ENCODE measurements at regions of chr4 and their contacts with region 1.

Region 1: DNA sequence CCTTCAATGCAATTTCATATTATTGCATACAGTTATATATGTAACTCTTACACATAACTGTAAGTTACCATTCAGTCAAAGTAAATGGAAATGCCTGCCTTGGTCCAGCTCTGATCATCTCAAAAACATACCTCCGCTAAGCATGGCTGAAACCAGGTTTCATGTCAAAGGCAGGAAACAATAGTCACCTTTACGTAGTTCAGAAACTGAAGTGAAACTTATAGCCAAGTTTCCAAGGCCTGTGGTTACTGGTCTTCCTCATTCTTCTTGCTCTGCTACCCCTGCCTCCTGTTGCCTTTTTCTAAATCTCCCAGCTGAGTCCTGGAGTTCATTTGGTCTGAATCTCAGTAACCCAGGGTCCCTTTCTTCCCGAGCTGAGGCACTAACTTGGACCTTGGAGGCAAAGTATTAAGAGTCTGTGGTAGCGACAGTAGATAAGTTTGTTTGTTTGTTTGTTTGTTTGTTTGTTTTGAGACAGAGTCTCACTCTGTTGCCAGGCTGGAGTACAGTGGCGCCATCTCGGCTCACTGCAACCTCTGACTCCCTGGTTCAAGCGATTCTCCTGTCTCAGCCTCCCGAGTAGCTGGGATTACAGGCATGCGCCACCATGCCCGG is 30.8 kb downstream of the DAPP1 start:
- DNase-seq: peak; percentile 40
- H3K4me3 Mint-ChIP-seq: peak overlapping the region; percentile 49
- H3K27ac Mint-ChIP-seq: peak overlapping the region; percentile 93
- H3K4me1 Mint-ChIP-seq: peaks cover 75% of the 10 kb centered on the region
- H3K27me3 Mint-ChIP-seq: no peaks in the 10 kb centered on the region

Region 2: DNA sequence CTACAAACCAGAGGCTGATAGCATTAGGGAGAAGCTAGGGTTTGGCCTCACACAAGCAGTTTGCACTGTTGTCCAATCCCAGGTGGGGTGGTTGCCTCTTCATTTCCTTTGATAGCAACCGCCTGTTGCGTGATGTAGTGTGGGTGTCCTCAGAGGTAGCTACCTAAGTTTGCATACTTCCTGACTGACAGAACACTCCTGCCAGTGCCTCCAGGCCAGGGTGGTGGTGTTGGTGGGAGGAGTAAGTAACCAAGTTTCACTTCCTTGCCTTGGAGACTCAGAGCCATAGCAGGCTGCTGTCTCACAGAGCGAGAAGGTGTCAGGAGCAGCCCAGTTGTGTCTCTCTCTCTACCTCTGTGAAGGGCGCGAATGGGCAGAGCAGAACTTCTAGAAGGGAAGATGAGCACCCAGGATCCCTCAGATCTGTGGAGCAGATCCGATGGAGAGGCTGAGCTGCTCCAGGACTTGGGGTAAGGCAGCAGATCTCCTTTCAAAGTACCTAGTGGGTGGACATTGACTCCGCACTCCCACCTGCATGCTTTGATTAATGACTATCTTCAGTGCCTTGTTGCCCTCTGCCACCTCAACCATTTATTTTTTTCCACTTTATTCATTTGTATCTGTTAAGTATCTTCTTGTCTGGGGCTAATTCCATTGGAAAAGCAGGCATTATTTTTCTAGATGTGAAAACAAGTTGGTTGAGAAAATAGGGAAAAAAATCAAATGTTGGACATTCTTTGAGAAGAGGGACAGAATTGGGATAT is 30.7 kb before region 1 on chr4 and contains the start of gene DAPP1:
- CTCF ChIA-PET with region 1: interaction called, 20 read pairs
- DNase-seq: peak; percentile 91
- H3K4me3 Mint-ChIP-seq: peak within 1 kb of the TSS; percentile 86
- H3K27ac Mint-ChIP-seq: peak within 1 kb of the TSS; percentile 96
- H3K4me1 Mint-ChIP-seq: peaks cover 67% of the 10 kb centered on the region
- H3K27me3 Mint-ChIP-seq: no peaks in the 10 kb centered on the region

Measured in activated naive CD4-positive, alpha-beta T cell treated with anti-CD3 and anti-CD28 coated beads, Interleukin-2, amount 10 ng/mL, durations not matched to agents 7 days and 5 days (primary cell).